ENCODE measurements at regions of chr20 and their contacts with region 1.

Region 1: GRCh38 chr20:32681175-32682084 is 7.7 kb upstream of the C20orf203 start:
- DNase-seq: peak; percentile 49 to 67
- H3K4me3 ChIP-seq: peak overlapping the region in 1 of 4 experiments; percentile 6; a peak in 1 of 8 replicates
- H3K27ac ChIP-seq: no peak overlapping the region
- H3K4me1 ChIP-seq: peaks cover 11 to 16% (median 12%) of the 10 kb centered on the region in 4 experiments
- H3K27me3 ChIP-seq: no peaks in the 10 kb centered on the region
- CTCF ChIP-seq: no peak
- EP300 ChIP-seq: no peak
- POLR2A ChIP-seq: no peak
- RAD21 ChIP-seq: no peak

Region 2: DNA sequence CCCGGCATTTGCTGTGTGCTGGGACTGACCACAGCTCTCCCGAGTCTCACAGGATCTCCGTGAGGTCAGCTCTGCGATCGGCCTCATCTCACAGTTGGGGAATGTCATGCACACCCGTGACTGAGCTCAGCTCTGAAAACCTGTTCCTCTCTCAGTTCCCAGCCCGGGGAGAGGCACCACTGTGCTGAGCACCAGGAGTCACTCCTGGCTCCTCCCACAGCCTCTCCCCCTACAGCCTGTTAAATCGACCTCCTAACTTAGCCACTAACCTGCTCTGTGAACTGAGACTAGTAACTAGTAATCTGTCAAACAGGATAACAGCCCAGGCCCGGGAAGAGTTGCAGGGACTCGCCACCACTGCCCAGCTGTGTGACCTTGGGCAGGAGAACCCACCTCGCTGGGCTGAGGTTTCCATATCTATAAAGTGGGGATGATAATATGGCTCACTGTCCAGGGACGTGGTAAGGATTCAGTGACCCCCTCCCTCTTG is 76.2 kb before region 1 on chr20:
- CTCF ChIA-PET with region 1: no interaction called
- POLR2A ChIA-PET with region 1: no interaction called
- DNase-seq: no peak
- H3K4me3 ChIP-seq: no peak overlapping the region
- H3K27ac ChIP-seq: no peak overlapping the region
- H3K4me1 ChIP-seq: peaks cover 0 to 5% (median 1%) of the 10 kb centered on the region in 4 experiments; a peak in 3 of 7 replicates
- H3K27me3 ChIP-seq: peaks cover 0 to 5% (median 0%) of the 10 kb centered on the region in 4 experiments; a peak in 1 of 7 replicates
- CTCF ChIP-seq: no peak
- EP300 ChIP-seq: no peak
- POLR2A ChIP-seq: no peak
- RAD21 ChIP-seq: no peak

Region 3: GRCh38 chr20:32647606-32648005 is 33.8 kb before region 1 on chr20:
- CTCF ChIA-PET with region 1: no interaction called
- POLR2A ChIA-PET with region 1: no interaction called
- DNase-seq: no peak
- H3K4me3 ChIP-seq: no peak overlapping the region
- H3K27ac ChIP-seq: no peak overlapping the region
- H3K4me1 ChIP-seq: peaks cover 0 to 4% (median 0%) of the 10 kb centered on the region in 4 experiments; a peak in 2 of 7 replicates
- H3K27me3 ChIP-seq: no peaks in the 10 kb centered on the region
- CTCF ChIP-seq: no peak
- EP300 ChIP-seq: no peak
- POLR2A ChIP-seq: no peak
- RAD21 ChIP-seq: peak; percentile 10 to 18; a peak in 2 of 4 replicates

Region 4: GRCh38 chr20:32697608-32698007 is 16.2 kb after region 1 on chr20:
- CTCF ChIA-PET with region 1: interaction called, 8 read pairs
- POLR2A ChIA-PET with region 1: interaction called, 13 read pairs
- DNase-seq: no peak
- H3K4me3 ChIP-seq: no peak overlapping the region
- H3K27ac ChIP-seq: no peak overlapping the region
- H3K4me1 ChIP-seq: peaks cover 0 to 4% (median 2%) of the 10 kb centered on the region in 4 experiments; a peak in 1 of 7 replicates
- H3K27me3 ChIP-seq: no peaks in the 10 kb centered on the region
- CTCF ChIP-seq: no peak
- EP300 ChIP-seq: no peak
- POLR2A ChIP-seq: no peak; a peak in 1 of 3 replicates
- RAD21 ChIP-seq: no peak